Activated CD4-positive, alpha-beta T cell treated with anti-CD3 and anti-CD28 coated beads for 36 hours (primary cell): ENCODE measurements at regions of chr4 and their contacts with region 1.

Region 1: DNA sequence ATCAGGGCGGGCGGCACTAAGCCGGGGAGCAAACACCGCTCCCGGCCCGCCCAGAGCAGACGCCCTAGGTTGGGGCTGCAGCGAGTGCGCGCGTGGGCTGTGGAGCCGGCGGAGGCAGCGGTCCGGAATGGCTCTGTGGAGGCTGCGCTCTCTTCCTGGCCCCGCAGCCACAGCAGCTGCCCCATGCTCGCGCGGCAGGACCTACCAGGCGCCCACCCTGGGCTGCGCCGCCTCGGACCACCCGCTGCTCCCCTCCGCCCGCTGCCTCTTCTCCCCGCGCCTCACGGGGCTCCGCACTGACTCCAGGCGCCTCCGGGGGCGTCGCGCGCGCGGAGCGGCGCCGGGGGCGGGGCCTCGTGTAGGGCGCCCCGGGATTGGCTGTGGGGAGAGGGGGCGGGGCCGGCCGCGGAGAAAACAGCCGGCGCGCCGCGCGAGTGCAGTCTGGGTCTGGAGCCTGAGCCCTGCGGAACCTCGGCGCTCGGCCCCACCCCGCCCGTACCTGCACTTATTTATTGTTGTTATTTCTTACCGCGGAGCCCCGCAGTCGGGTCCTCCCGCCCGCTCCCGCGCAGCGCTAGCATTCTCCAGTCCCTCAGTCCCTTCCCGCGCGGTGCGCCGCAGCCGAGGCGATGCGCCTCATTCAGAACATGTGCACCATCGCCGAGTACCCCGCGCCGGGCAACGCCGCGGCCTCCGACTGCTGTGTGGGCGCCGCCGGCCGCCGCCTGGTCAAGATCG is at the start of gene RASL11B:
- DNase-seq: peak; percentile 91
- ATAC-seq: peak; percentile 99
- H3K4me3 Mint-ChIP-seq: peak within 1 kb of the TSS; percentile 63
- H3K27ac Mint-ChIP-seq: peak within 1 kb of the TSS; percentile 73
- H3K4me1 Mint-ChIP-seq: peaks cover 9% of the 10 kb centered on the region
- H3K27me3 Mint-ChIP-seq: peaks cover 30% of the 10 kb centered on the region
- total RNA-seq, gene RASL11B: 0.23 to 0.25 TPM

Region 2: GRCh38 chr4:52477191-52477780 is 384.8 kb before region 1 on chr4:
- CTCF ChIA-PET with region 1: no interaction called
- POLR2A ChIA-PET with region 1: no interaction called
- intact Hi-C with region 1: no loop called
- DNase-seq: no peak
- ATAC-seq: no peak
- H3K4me3 Mint-ChIP-seq: no peak overlapping the region
- H3K27ac Mint-ChIP-seq: no peak overlapping the region
- H3K4me1 Mint-ChIP-seq: no peaks in the 10 kb centered on the region
- H3K27me3 Mint-ChIP-seq: peaks cover 4% of the 10 kb centered on the region

Region 3: GRCh38 chr4:52659001-52659721 is 202.9 kb before region 1 on chr4 and contains the start of gene USP46:
- CTCF ChIA-PET with region 1: no interaction called
- POLR2A ChIA-PET with region 1: no interaction called
- intact Hi-C with region 1: loop called in 1 of 2 experiments (anchors 1 kb)
- DNase-seq: peak; percentile 74
- ATAC-seq: peak; percentile 86
- H3K4me3 Mint-ChIP-seq: peak within 1 kb of the TSS; percentile 80
- H3K27ac Mint-ChIP-seq: peak within 1 kb of the TSS; percentile 78
- H3K4me1 Mint-ChIP-seq: peaks cover 18% of the 10 kb centered on the region
- H3K27me3 Mint-ChIP-seq: peaks cover 12% of the 10 kb centered on the region
- total RNA-seq, gene USP46: 4.3 to 5.4 TPM

Region 4: GRCh38 chr4:52721968-52722815 is 139.9 kb before region 1 on chr4:
- CTCF ChIA-PET with region 1: interaction called, 3 read pairs
- POLR2A ChIA-PET with region 1: no interaction called
- intact Hi-C with region 1: loop called in 1 of 2 experiments (anchors 2 kb)
- DNase-seq: peak; percentile 93
- ATAC-seq: peak; percentile 99
- H3K4me3 Mint-ChIP-seq: peak overlapping the region; percentile 70
- H3K27ac Mint-ChIP-seq: peak overlapping the region; percentile 70
- H3K4me1 Mint-ChIP-seq: peaks cover 7% of the 10 kb centered on the region
- H3K27me3 Mint-ChIP-seq: no peaks in the 10 kb centered on the region

Region 5: DNA sequence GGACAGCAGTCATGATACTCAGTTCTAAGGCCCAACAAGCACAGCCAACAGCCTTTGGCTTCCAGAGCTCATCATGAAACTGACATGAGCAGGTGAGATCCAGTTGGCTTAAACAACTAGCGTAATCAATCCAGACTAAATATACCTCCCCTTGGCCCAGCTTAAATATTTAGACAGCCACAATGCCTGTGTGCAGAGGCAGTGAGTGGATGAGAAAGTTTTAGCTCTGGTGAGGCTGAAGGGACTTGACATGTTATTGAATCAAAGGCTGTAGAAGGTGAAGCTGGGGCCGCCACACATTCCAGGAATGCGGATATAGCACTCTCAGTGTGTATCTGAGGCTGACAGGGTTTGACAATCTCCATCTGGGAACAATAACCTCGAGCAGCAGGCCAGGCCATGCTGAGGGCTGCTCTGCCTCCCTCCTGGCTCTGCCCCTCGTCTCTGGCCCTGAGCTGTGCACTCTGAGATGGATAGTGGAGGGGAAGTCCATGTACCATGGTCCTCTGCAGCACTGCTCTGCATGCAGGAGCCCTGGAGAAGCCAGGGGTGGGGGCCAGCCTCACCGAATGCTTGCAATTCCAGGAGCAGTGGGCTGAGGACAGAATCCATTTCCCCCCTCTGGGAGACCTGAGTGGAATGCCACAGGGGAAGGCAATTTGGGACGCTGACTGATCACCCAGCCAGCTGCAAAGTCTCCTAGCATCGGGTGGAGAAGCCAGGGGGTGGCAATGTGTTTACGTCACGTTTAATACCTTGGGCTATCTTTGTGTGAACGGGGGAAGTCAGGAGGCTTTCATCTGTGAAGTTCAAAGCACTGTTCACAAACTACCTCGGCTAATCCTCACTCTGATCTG is 37.2 kb before region 1 on chr4:
- CTCF ChIA-PET with region 1: no interaction called
- POLR2A ChIA-PET with region 1: no interaction called
- intact Hi-C with region 1: loop called in 1 of 2 experiments (anchors 5 kb)
- DNase-seq: no peak
- ATAC-seq: no peak
- H3K4me3 Mint-ChIP-seq: no peak overlapping the region
- H3K27ac Mint-ChIP-seq: peak overlapping the region; percentile 41
- H3K4me1 Mint-ChIP-seq: peaks cover 37% of the 10 kb centered on the region
- H3K27me3 Mint-ChIP-seq: no peaks in the 10 kb centered on the region